ENCODE measurements at regions of chr20 and their contacts with region 1.

Region 1: DNA sequence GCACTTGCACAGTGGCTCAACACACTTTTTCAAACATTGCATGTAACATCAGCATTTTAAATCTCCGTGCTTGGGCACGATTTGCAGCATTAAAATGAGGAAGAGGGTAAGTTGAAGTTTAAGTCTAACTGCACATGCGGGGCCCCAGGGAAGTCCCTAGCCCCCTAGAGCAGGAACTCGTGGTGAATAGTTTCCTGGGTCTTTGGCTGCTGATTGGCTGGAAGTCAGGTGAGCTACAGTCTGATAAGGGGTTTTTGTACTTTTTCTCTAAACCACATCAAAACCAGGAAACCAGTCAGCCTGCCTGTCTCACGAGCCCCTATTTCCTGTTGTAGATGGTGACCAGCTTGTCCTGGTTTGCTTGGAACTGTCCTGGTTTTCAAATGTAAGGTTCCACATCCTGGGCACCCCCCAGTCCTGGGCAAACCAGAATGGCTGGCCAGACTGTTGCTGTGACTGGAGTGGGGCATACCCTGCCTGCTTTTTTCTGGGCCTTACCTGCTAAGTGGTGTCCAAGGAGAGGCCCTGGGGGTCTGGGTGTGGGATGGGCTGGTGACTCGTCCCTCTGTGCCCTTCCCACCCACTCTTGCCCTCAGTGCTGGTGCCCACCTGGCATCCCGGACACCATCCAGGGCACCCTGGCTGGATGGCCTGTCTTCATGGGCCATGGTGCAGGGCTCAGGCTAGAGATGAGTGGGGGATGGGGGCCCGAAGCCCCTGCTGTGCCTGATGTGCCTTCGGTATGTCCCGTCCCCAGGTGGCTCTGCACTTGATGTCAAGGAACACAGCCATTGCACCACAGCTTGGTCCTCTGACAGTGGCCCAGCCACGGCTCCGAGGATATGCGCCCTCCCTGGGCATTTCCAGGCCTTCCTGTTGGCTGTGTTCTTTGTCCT is 31.8 kb downstream of the SUN5 start:
- DNase-seq: peak; percentile 91
- H3K4me3 Mint-ChIP-seq: no peak overlapping the region
- H3K27ac Mint-ChIP-seq: no peak overlapping the region
- H3K4me1 Mint-ChIP-seq: peaks cover 73% of the 10 kb centered on the region
- H3K27me3 Mint-ChIP-seq: no peaks in the 10 kb centered on the region

Region 2: GRCh38 chr20:32995802-32996201 is 23.4 kb after region 1 on chr20:
- CTCF ChIA-PET with region 1: interaction called, 3 read pairs
- POLR2A ChIA-PET with region 1: no interaction called
- intact Hi-C with region 1: loop called (anchors 2 kb)
- DNase-seq: no peak
- H3K4me3 Mint-ChIP-seq: no peak overlapping the region
- H3K27ac Mint-ChIP-seq: no peak overlapping the region
- H3K4me1 Mint-ChIP-seq: peaks cover 14% of the 10 kb centered on the region
- H3K27me3 Mint-ChIP-seq: no peaks in the 10 kb centered on the region

Region 3: GRCh38 chr20:33005132-33005566 is 32.7 kb after region 1 on chr20:
- CTCF ChIA-PET with region 1: interaction called, 7 read pairs
- POLR2A ChIA-PET with region 1: no interaction called
- intact Hi-C with region 1: loop called (anchors 2 kb)
- DNase-seq: peak; percentile 25
- H3K4me3 Mint-ChIP-seq: no peak overlapping the region
- H3K27ac Mint-ChIP-seq: no peak overlapping the region
- H3K4me1 Mint-ChIP-seq: peaks cover 10% of the 10 kb centered on the region
- H3K27me3 Mint-ChIP-seq: no peaks in the 10 kb centered on the region

Region 4: GRCh38 chr20:33092361-33092760 is 119.9 kb after region 1 on chr20:
- CTCF ChIA-PET with region 1: no interaction called
- POLR2A ChIA-PET with region 1: no interaction called
- intact Hi-C with region 1: no loop called
- DNase-seq: no peak
- H3K4me3 Mint-ChIP-seq: no peak overlapping the region
- H3K27ac Mint-ChIP-seq: no peak overlapping the region
- H3K4me1 Mint-ChIP-seq: peaks cover 2% of the 10 kb centered on the region
- H3K27me3 Mint-ChIP-seq: no peaks in the 10 kb centered on the region

Measured in activated CD4-positive, alpha-beta memory T cell treated with anti-CD3 and anti-CD28 coated beads for 36 hours (primary cell).